ENCODE measurements at regions of chr17 and their contacts with region 1.

Region 1: GRCh38 chr17:63275318-63275970 is 170.7 kb downstream of the CYB561 start:
- DNase-seq: no peak
- ATAC-seq: no peak
- H3K4me3 ChIP-seq: no peak overlapping the region
- H3K27ac ChIP-seq: no peak overlapping the region
- H3K4me1 ChIP-seq: no peaks in the 10 kb centered on the region
- H3K27me3 ChIP-seq: no peaks in the 10 kb centered on the region
- CTCF ChIP-seq: no peak
- POLR2A ChIP-seq: no peak

Region 2: DNA sequence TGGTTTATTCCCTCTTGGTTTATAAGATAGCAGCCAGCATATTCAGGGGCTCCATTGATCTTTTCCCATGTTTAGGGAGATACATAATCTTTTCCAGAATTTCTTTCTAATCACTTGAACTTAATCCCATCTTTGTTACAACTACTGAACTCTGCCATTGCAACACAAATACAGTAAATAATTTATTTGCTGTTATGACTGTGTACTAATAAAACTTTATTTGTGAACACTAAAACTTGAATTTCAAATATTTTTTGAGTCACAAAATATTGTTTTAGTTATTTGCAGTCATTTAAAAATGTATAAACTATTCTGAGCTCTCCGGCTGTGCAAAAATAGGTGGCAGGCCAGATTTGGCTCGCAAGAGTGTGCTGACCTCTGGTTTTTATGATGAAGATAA is 222.8 kb before region 1 on chr17:
- in situ Hi-C with region 1: no loop called
- intact Hi-C with region 1: no loop called
- DNase-seq: no peak
- ATAC-seq: no peak
- H3K4me3 ChIP-seq: no peak overlapping the region
- H3K27ac ChIP-seq: no peak overlapping the region
- H3K4me1 ChIP-seq: no peaks in the 10 kb centered on the region
- H3K27me3 ChIP-seq: no peaks in the 10 kb centered on the region
- CTCF ChIP-seq: no peak
- POLR2A ChIP-seq: no peak

Region 3: DNA sequence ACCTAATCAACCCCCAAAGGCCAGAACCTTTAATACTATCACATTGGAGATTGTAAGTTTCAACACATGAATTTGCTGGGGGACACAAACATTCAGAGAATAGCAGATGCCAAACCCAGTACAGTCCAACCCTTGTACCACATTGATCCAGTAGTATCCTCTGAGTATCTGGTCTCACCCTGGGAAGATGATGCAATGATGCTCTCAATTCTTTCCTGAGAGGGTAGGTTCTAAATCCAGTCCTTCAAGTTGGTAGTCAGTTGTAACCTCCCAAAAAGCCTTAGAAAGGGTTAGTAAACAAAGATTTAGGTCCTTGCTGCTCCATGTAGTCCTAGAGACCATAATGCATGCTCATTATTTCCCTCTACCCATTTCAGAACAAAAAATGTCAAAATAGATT is 60.8 kb before region 1 on chr17:
- in situ Hi-C with region 1: loop called in 1 of 4 experiments (anchors 10 kb)
- intact Hi-C with region 1: no loop called
- DNase-seq: no peak
- ATAC-seq: no peak
- H3K4me3 ChIP-seq: no peak overlapping the region
- H3K27ac ChIP-seq: no peak overlapping the region
- H3K4me1 ChIP-seq: no peaks in the 10 kb centered on the region
- H3K27me3 ChIP-seq: no peaks in the 10 kb centered on the region
- CTCF ChIP-seq: no peak
- POLR2A ChIP-seq: no peak

Region 4: DNA sequence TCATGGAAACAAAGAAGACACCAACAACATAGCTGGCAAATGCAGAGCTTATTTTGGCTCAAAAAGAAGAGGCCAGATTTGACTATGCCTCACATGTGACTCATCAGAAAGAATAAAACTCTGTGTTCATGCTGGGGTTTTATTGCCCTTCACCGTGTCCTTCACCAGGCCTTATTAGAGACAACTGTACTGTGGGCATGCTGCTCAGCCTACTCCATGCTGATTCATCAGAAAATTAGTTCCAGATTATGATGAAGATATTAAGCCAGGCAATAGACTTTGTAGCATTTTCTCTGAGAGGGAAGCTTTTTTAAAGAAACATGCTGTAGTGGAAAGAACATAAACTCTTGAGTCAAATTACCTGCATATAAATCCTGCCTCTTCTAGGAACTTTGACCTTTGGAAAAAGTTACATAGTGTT is 80.9 kb after region 1 on chr17:
- in situ Hi-C with region 1: no loop called
- intact Hi-C with region 1: loop called (anchors 10 kb)
- DNase-seq: no peak
- ATAC-seq: peak; percentile 62 to 76
- H3K4me3 ChIP-seq: no peak overlapping the region
- H3K27ac ChIP-seq: no peak overlapping the region
- H3K4me1 ChIP-seq: no peaks in the 10 kb centered on the region
- H3K27me3 ChIP-seq: no peaks in the 10 kb centered on the region
- CTCF ChIP-seq: no peak
- POLR2A ChIP-seq: no peak

Region 5: DNA sequence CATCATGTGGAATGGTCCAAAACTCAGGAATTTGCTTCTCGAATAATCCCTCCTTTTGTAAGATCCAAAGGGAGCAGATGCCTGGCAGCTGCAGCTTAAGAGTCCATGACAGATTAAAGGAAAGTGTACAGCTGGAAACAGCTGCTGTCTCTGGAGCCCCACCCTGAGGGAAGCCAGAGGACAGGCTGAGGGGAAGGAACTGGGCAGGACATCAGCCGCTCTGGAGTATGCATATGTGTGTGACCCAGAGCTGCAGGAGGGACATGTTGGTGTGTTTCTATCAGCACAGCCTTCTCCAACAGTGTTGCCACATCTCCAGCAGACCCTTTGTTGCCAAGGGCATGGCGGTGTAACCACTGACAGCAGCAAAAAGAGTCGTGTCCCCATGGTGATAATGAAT is 124.4 kb after region 1 on chr17:
- in situ Hi-C with region 1: loop called in 1 of 4 experiments (anchors 25 kb)
- intact Hi-C with region 1: no loop called
- DNase-seq: peak in 1 of 2 donors; percentile 53
- ATAC-seq: peak in 1 of 2 donors; percentile 36
- H3K4me3 ChIP-seq: no peak overlapping the region
- H3K27ac ChIP-seq: no peak overlapping the region
- H3K4me1 ChIP-seq: peaks cover 0 to 11% of the 10 kb centered on the region in 2 donors
- H3K27me3 ChIP-seq: no peaks in the 10 kb centered on the region
- CTCF ChIP-seq: no peak
- POLR2A ChIP-seq: no peak

Region 6: DNA sequence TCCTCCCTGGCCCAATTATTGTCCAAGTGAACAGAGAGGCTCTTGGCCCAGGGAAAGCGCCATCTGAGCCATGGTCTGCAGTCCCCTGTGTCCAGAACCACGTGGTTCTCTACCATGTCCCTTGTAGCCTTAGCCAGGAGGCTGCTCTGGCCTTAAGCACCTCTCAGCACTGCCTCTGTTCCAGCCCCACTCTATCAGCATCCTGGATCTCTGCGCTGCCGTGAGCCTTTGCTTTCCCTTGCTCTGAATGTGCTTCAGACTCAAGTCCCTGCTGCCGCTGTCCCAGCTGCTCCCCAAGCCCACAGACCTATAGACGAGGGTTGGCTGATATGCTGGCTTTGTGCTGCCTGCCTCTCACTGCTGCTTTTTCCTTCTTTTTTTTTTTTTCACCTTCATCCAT is 136.8 kb after region 1 on chr17:
- in situ Hi-C with region 1: no loop called
- intact Hi-C with region 1: no loop called
- DNase-seq: no peak
- ATAC-seq: no peak
- H3K4me3 ChIP-seq: no peak overlapping the region
- H3K27ac ChIP-seq: no peak overlapping the region
- H3K4me1 ChIP-seq: no peaks in the 10 kb centered on the region
- H3K27me3 ChIP-seq: no peaks in the 10 kb centered on the region
- CTCF ChIP-seq: no peak
- POLR2A ChIP-seq: no peak